ENCODE measurements at regions of chr11 and their contacts with region 1.

Region 1: GRCh38 chr11:66371627-66372415 is at the start of gene SLC29A2:
- DNase-seq: peak; percentile 50 to 84 (median 74)
- ATAC-seq: peak; percentile 63 to 82 (median 76)
- H3K4me3 ChIP-seq: peak within 1 kb of the TSS; percentile 56 to 88 (median 75)
- H3K27ac ChIP-seq: peak within 1 kb of the TSS; percentile 73 to 92 (median 84)
- H3K4me1 ChIP-seq: peaks cover 0 to 48% (median 23%) of the 10 kb centered on the region in 12 donors
- H3K27me3 ChIP-seq: peaks cover 0 to 46% (median 9%) of the 10 kb centered on the region in 9 donors
- CTCF ChIP-seq: no peak
- POLR2A ChIP-seq: peak in 1 of 2 donors; percentile 8
- total RNA-seq, gene SLC29A2: 6.8 to 30.9 (median 13.1) TPM

Region 2: GRCh38 chr11:66333896-66334604 is 37.8 kb before region 1 on chr11:
- intact Hi-C with region 1: no loop called
- DNase-seq: peak in 3 of 5 donors; percentile 17 to 41 (median 20)
- ATAC-seq: no peak
- H3K4me3 ChIP-seq: no peak overlapping the region
- H3K27ac ChIP-seq: no peak overlapping the region
- H3K4me1 ChIP-seq: peaks cover 4 to 36% (median 20%) of the 10 kb centered on the region in 12 donors
- H3K27me3 ChIP-seq: no peaks in the 10 kb centered on the region
- CTCF ChIP-seq: no peak
- POLR2A ChIP-seq: no peak

Region 3: GRCh38 chr11:66344550-66345315 is 27.1 kb before region 1 on chr11 and contains the start of gene BRMS1:
- intact Hi-C with region 1: loop called in 1 of 10 experiments (anchors 1 kb)
- DNase-seq: peak; percentile 98 to 100 (median 99)
- ATAC-seq: peak; percentile 89 to 96 (median 91)
- H3K4me3 ChIP-seq: peak within 1 kb of the TSS; percentile 84 to 100 (median 96)
- H3K27ac ChIP-seq: peak within 1 kb of the TSS in 11 of 12 donors; percentile 41 to 87 (median 80)
- H3K4me1 ChIP-seq: peaks cover 4 to 47% (median 34%) of the 10 kb centered on the region in 12 donors
- H3K27me3 ChIP-seq: no peaks in the 10 kb centered on the region
- CTCF ChIP-seq: peak in 3 of 12 donors; percentile 14 to 19 (median 17)
- POLR2A ChIP-seq: peak in 1 of 2 donors; percentile 89
- total RNA-seq, gene BRMS1: 9.7 to 39.2 (median 16.5) TPM

Region 4: GRCh38 chr11:66429983-66430602 is 58.3 kb after region 1 on chr11:
- intact Hi-C with region 1: no loop called
- DNase-seq: peak; percentile 58 to 81 (median 71)
- ATAC-seq: peak in 3 of 4 donors; percentile 78
- H3K4me3 ChIP-seq: no peak overlapping the region
- H3K27ac ChIP-seq: no peak overlapping the region
- H3K4me1 ChIP-seq: no peaks in the 10 kb centered on the region
- H3K27me3 ChIP-seq: no peaks in the 10 kb centered on the region
- CTCF ChIP-seq: peak; percentile 62 to 83 (median 70)
- POLR2A ChIP-seq: no peak

Measured in heart left ventricle (tissue), 16 donors.